Caco-2 (cell line): ENCODE measurements at regions of chr12 and their contacts with region 1.

Region 1: DNA sequence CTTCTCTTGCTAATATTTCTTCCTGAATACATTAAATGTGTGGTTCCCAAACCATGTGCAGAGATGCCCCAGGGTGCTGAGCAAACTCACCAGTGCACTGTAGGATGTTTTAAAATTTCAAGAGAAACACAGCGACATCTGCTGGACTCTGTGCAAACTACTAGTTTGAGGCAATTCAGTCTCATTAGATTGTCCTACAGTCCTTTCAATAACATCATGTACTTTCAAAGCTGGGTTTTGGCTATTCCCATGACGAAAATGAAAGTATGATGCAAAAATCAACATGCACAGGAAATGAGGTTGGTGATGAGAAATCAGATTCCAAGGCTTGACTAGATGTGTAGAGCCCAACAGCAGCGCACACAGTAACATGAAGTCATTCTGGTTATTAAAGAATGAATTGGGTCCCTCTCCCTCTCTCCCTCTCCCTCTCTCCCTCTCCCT is 66.3 kb downstream of the CLIP1 start:
- DNase-seq: peak in 1 of 2 experiments; percentile 56
- H3K4me3 ChIP-seq: no peak overlapping the region
- H3K4me3 Mint-ChIP-seq: no peak overlapping the region
- H3K27ac Mint-ChIP-seq: peak overlapping the region; percentile 21
- H3K4me1 ChIP-seq: no peaks in the 10 kb centered on the region
- H3K4me1 Mint-ChIP-seq: no peaks in the 10 kb centered on the region
- H3K27me3 ChIP-seq: no peaks in the 10 kb centered on the region
- H3K27me3 Mint-ChIP-seq: no peaks in the 10 kb centered on the region
- CTCF ChIP-seq: peak; percentile 58 to 78

Region 2: GRCh38 chr12:122306407-122306806 is 49.8 kb before region 1 on chr12:
- CTCF ChIA-PET with region 1: no interaction called
- POLR2A ChIA-PET with region 1: no interaction called
- intact Hi-C with region 1: loop called (anchors 1 kb)
- DNase-seq: peak; percentile 42
- H3K4me3 ChIP-seq: no peak overlapping the region
- H3K4me3 Mint-ChIP-seq: no peak overlapping the region
- H3K27ac Mint-ChIP-seq: no peak overlapping the region
- H3K4me1 ChIP-seq: no peaks in the 10 kb centered on the region
- H3K4me1 Mint-ChIP-seq: peaks cover 6% of the 10 kb centered on the region
- H3K27me3 ChIP-seq: no peaks in the 10 kb centered on the region
- H3K27me3 Mint-ChIP-seq: no peaks in the 10 kb centered on the region
- CTCF ChIP-seq: peak; percentile 44 to 74

Region 3: GRCh38 chr12:122336015-122336946 is 19.9 kb before region 1 on chr12:
- CTCF ChIA-PET with region 1: interaction called, 3 read pairs
- POLR2A ChIA-PET with region 1: no interaction called
- intact Hi-C with region 1: loop called (anchors 1 kb)
- DNase-seq: peak in 1 of 2 experiments; percentile 51
- H3K4me3 ChIP-seq: no peak overlapping the region
- H3K4me3 Mint-ChIP-seq: no peak overlapping the region
- H3K27ac Mint-ChIP-seq: no peak overlapping the region
- H3K4me1 ChIP-seq: no peaks in the 10 kb centered on the region
- H3K4me1 Mint-ChIP-seq: no peaks in the 10 kb centered on the region
- H3K27me3 ChIP-seq: no peaks in the 10 kb centered on the region
- H3K27me3 Mint-ChIP-seq: no peaks in the 10 kb centered on the region
- CTCF ChIP-seq: peak; percentile 76 to 87

Region 4: GRCh38 chr12:122395319-122395718 is 39.1 kb after region 1 on chr12:
- CTCF ChIA-PET with region 1: no interaction called
- POLR2A ChIA-PET with region 1: no interaction called
- intact Hi-C with region 1: no loop called
- DNase-seq: no peak
- H3K4me3 ChIP-seq: no peak overlapping the region
- H3K4me3 Mint-ChIP-seq: no peak overlapping the region
- H3K27ac Mint-ChIP-seq: peak overlapping the region; percentile 64
- H3K4me1 ChIP-seq: peaks cover 26% of the 10 kb centered on the region
- H3K4me1 Mint-ChIP-seq: peaks cover 16% of the 10 kb centered on the region
- H3K27me3 ChIP-seq: no peaks in the 10 kb centered on the region
- H3K27me3 Mint-ChIP-seq: no peaks in the 10 kb centered on the region
- CTCF ChIP-seq: no peak